K562 (cell line): ENCODE measurements at regions of chr1 and their contacts with region 1.

Region 1: GRCh38 chr1:17494114-17494729 is 45.3 kb upstream of the ARHGEF10L start:
- DNase-seq: peak; percentile 87 to 92 (median 90)
- ATAC-seq: peak; percentile 96
- H3K4me3 ChIP-seq: no peak overlapping the region
- H3K27ac ChIP-seq: no peak overlapping the region
- H3K4me1 ChIP-seq: peaks cover 0 to 3% of the 10 kb centered on the region in 2 experiments; a peak in 3 of 5 replicates
- H3K27me3 ChIP-seq: peaks cover 7 to 9% of the 10 kb centered on the region in 2 experiments; a peak in 4 of 5 replicates
- CTCF ChIP-seq: peak; percentile 98 to 99 (median 98)
- EP300 ChIP-seq: peak; percentile 21; the same call in 1 of the 2 replicates
- POLR2A ChIP-seq: no peak
- RAD21 ChIP-seq: peak; percentile 59 to 96

Region 2: GRCh38 chr1:17742583-17742982 is 248.4 kb after region 1 on chr1:
- CTCF ChIA-PET with region 1: no interaction called
- POLR2A ChIA-PET with region 1: no interaction called
- in situ Hi-C with region 1: no loop called
- intact Hi-C with region 1: loop called (anchors 10 kb)
- DNase-seq: no peak
- ATAC-seq: no peak
- H3K4me3 ChIP-seq: no peak overlapping the region
- H3K27ac ChIP-seq: no peak overlapping the region
- H3K4me1 ChIP-seq: no peaks in the 10 kb centered on the region
- H3K27me3 ChIP-seq: peaks cover 3 to 33% of the 10 kb centered on the region in 2 experiments; a peak in 4 of 5 replicates
- CTCF ChIP-seq: no peak
- EP300 ChIP-seq: no peak
- POLR2A ChIP-seq: no peak
- RAD21 ChIP-seq: no peak